WTC11 (cell line): ENCODE measurements at regions of chr3 and their contacts with region 1.

Region 1: GRCh38 chr3:185176750-185177359 is 24.0 kb upstream of the C3orf70 start:
- DNase-seq: peak; percentile 51
- ATAC-seq: no peak
- H3K4me3 Mint-ChIP-seq: no peak overlapping the region
- H3K27ac Mint-ChIP-seq: no peak overlapping the region
- H3K4me1 Mint-ChIP-seq: peaks cover 25% of the 10 kb centered on the region
- H3K27me3 Mint-ChIP-seq: no peaks in the 10 kb centered on the region
- CTCF ChIP-seq: peak; percentile 50; the same call in 1 of the 2 replicates

Region 2: DNA sequence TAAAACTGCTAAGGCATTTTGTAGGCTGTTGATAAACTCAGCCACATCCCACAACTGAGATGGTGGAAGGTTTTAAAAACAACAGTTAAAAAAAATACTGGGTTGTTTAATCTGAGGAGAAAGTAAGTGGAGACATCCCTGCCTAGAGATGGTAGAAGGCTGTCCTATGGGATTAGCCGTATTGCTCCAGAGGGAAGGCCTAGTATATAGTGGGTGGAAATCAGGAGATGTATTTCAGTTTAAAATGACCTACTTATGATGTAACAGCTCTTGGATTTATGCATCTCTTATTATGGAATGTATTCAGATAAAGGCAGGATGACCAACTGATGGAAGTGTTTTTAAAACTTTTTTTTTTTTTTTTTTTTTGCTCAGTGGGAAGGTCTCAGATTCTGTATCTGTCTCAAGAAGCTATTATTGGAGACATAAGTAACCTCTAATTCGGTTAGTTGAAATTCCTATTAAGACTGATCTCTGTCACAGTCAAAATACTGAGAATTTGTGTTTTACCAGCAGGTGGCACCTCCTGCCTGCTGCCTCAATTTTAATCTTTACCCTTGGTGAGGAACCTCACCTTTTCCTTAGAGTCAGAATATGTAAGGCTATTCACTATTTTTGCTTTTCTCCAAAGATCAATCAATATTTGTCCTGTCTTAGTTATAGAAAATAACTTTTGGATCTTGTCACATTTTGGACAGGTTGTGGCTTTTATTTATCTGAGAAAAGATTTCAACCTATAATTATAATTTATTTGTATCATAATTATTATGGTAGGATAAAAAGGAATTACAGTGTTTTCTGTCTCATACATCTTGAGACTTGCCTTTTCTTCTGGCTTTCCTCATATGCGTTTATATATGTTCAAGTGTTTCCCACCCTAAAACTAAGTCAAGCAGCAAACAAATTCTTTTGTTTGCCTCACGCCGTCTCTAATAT is 301.9 kb before region 1 on chr3:
- CTCF ChIA-PET with region 1: interaction called, 19 read pairs
- POLR2A ChIA-PET with region 1: interaction called, 3 read pairs
- DNase-seq: peak; percentile 18
- ATAC-seq: peak; percentile 43
- H3K4me3 Mint-ChIP-seq: no peak overlapping the region
- H3K27ac Mint-ChIP-seq: no peak overlapping the region
- H3K4me1 Mint-ChIP-seq: peaks cover 6% of the 10 kb centered on the region; the same call in 1 of the 2 replicates
- H3K27me3 Mint-ChIP-seq: no peaks in the 10 kb centered on the region
- CTCF ChIP-seq: peak; percentile 43; the same call in 1 of the 2 replicates

Region 3: GRCh38 chr3:185253645-185254410 is 77.0 kb after region 1 on chr3 and contains the start of gene EHHADH:
- CTCF ChIA-PET with region 1: no interaction called
- POLR2A ChIA-PET with region 1: no interaction called
- DNase-seq: peak; percentile 60
- ATAC-seq: peak; percentile 89
- H3K4me3 Mint-ChIP-seq: peak within 1 kb of the TSS; percentile 71
- H3K27ac Mint-ChIP-seq: no peak within 1 kb of the TSS
- H3K4me1 Mint-ChIP-seq: peaks cover 7% of the 10 kb centered on the region
- H3K27me3 Mint-ChIP-seq: no peaks in the 10 kb centered on the region
- CTCF ChIP-seq: no peak
- total RNA-seq, gene EHHADH: 4.2 to 4.9 TPM (median 4.3 TPM) in 3 replicates

Region 4: DNA sequence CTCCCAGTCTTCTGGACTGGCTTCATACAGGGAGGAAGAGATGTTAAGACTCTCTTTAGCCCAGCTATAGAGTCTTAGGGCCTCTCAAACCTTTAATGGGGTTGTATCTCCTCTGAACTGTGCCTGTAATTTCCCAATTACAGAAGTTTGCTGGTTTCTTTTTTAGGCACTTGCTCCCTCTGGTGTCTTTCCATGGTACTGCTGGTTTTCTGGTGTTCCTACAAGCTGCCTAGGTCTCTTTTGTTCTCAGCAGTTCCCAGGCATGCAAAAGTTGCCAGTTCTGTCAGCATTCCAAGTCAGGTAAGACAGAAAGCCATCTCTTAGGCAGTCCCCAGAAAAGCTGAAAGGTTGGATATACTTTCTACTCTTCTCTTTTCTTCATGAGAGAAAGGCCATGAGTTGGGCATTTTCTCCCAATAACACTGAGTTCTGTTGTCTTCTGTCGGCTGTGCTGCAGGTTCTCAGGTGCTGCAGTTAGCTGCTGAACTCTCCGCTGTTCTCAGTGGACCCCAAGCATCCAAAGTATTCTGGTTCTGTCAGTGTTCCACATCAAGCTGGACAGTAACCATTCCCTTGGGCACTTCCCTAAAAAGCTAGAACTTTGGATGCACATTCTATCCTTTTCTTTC is 131.4 kb after region 1 on chr3:
- CTCF ChIA-PET with region 1: interaction called, 10 read pairs
- POLR2A ChIA-PET with region 1: no interaction called
- DNase-seq: peak; percentile 78
- ATAC-seq: peak; percentile 93
- H3K4me3 Mint-ChIP-seq: no peak overlapping the region
- H3K27ac Mint-ChIP-seq: no peak overlapping the region
- H3K4me1 Mint-ChIP-seq: 0 out of 2 replicates have a peak, but pooled peaks cover 3% of the 10 kb centered on the region
- H3K27me3 Mint-ChIP-seq: peaks cover 4% of the 10 kb centered on the region; the same call in 1 of the 2 replicates
- CTCF ChIP-seq: peak; percentile 53; the same call in 1 of the 2 replicates

Region 5: GRCh38 chr3:185353823-185354614 is 177.2 kb after region 1 on chr3:
- CTCF ChIA-PET with region 1: no interaction called
- POLR2A ChIA-PET with region 1: no interaction called
- DNase-seq: peak; percentile 93
- ATAC-seq: peak; percentile 100
- H3K4me3 Mint-ChIP-seq: no peak overlapping the region
- H3K27ac Mint-ChIP-seq: no peak overlapping the region
- H3K4me1 Mint-ChIP-seq: no peaks in the 10 kb centered on the region
- H3K27me3 Mint-ChIP-seq: peaks cover 82% of the 10 kb centered on the region
- CTCF ChIP-seq: peak; percentile 70